Mammary epithelial cell (primary cell): ENCODE measurements at regions of chr9 and their contacts with region 1.

Region 1: GRCh38 chr9:21777701-21778100 is 24.7 kb upstream of the MTAP start:
- DNase-seq: peak; percentile 61
- H3K4me3 ChIP-seq: peak overlapping the region in 1 of 3 experiments; percentile 22
- H3K27ac ChIP-seq: peak overlapping the region; percentile 74
- H3K4me1 ChIP-seq: peaks cover 38% of the 10 kb centered on the region
- H3K27me3 ChIP-seq: no peaks in the 10 kb centered on the region
- CTCF ChIP-seq: no peak

Region 2: DNA sequence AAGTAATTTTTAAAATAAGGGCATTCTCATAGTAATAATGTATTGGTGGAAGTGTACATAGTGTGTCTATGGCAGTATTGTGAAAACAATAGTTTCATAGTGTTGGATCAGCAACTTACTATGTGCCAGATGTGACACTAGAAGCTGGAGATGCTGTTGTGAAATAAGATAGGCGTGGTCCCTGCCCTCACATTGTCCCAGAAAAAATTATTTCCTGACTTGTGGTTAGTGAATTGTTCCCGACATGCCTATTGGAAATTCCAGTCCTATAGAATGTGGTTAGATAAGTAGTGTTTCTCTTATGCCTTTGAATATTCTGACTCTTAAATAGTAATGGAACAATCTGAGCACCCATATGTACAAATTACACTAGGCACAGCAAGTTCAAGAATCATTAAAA is 30.5 kb before region 1 on chr9:
- CTCF ChIA-PET with region 1: no interaction called
- dilution Hi-C with region 1: no loop called
- in situ Hi-C with region 1: no loop called
- intact Hi-C with region 1: loop called (anchors 2 kb)
- DNase-seq: peak; percentile 88
- H3K4me3 ChIP-seq: no peak overlapping the region
- H3K27ac ChIP-seq: peak overlapping the region; percentile 78
- H3K4me1 ChIP-seq: peaks cover 74% of the 10 kb centered on the region
- H3K27me3 ChIP-seq: no peaks in the 10 kb centered on the region
- CTCF ChIP-seq: no peak